Psoas muscle (tissue), 8 donors: ENCODE measurements at regions of chr17 and their contacts with region 1.

Region 1: DNA sequence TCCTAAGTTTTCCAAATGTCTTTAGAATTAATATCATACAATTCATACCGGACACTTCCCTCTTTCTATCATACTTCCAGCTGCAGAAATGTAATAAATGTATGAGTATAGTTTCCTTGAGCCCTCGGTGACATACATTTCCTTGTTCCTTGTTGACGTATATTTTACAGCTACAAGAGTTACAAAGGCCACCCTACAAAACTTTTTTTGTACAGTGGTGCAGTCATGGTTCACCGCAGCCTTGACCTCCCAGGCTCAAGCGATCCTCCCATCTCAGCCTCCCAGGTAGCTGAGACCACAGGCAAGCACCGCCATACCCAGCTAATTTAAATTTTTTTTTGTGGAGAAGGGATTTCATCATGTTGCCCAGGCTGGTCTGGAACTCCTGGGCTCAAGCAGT is 7.2 kb upstream of the DUS1L start:
- DNase-seq: peak in 1 of 2 donors; percentile 8
- ATAC-seq: no peak
- H3K4me3 ChIP-seq: no peak overlapping the region
- H3K27ac ChIP-seq: no peak overlapping the region
- H3K4me1 ChIP-seq: no peaks in the 10 kb centered on the region
- H3K27me3 ChIP-seq: no peaks in the 10 kb centered on the region
- CTCF ChIP-seq: no peak

Region 2: DNA sequence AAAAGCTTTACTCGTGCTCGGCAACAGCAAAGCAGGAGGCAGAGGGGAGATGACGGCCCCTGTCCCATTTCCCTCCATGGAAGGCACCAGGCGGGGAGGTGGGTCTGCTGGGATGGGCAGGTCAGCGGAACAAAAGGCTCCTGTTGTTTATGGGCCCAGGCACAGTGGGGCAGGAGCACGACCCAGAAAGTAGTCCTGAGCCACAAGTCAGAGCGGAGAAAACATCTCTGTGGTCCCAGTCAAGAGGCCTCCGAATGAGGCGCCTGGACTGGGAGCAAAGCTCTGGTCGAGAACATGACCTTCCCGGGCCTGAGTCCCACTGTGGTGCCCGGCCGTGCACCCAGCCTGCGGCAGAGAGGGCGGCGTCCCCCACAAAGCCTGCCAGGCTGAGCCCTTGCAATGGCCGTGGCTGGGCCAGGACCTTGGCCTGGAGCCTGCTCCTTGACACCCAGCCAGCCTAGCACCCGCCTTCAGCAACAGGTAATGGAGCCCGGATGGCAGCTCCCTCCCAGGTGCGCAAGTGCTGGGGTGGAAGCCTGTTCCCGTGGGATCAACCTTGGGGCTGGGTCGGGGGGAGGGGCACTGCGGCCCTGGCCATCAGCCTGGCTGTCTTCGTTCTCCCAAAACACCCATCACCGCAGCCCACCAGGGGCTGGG is 24.8 kb before region 1 on chr17:
- intact Hi-C with region 1: loop called in 1 of 2 experiments (anchors 2 kb)
- DNase-seq: peak in 1 of 2 donors; percentile 39
- ATAC-seq: no peak
- H3K4me3 ChIP-seq: no peak overlapping the region
- H3K27ac ChIP-seq: no peak overlapping the region
- H3K4me1 ChIP-seq: peaks cover 19% of the 10 kb centered on the region
- H3K27me3 ChIP-seq: no peaks in the 10 kb centered on the region
- CTCF ChIP-seq: no peak

Region 3: GRCh38 chr17:82267575-82268379 is 194.9 kb after region 1 on chr17:
- intact Hi-C with region 1: no loop called
- DNase-seq: peak; percentile 97 to 99
- ATAC-seq: peak; percentile 92 to 97 (median 94)
- H3K4me3 ChIP-seq: peak overlapping the region; percentile 46
- H3K27ac ChIP-seq: peak overlapping the region; percentile 81
- H3K4me1 ChIP-seq: peaks cover 65% of the 10 kb centered on the region
- H3K27me3 ChIP-seq: no peaks in the 10 kb centered on the region
- CTCF ChIP-seq: no peak